Activated naive CD4-positive, alpha-beta T cell treated with anti-CD3 and anti-CD28 coated beads for 36 hours (primary cell): ENCODE measurements at regions of chr6 and their contacts with region 1.

Region 1: DNA sequence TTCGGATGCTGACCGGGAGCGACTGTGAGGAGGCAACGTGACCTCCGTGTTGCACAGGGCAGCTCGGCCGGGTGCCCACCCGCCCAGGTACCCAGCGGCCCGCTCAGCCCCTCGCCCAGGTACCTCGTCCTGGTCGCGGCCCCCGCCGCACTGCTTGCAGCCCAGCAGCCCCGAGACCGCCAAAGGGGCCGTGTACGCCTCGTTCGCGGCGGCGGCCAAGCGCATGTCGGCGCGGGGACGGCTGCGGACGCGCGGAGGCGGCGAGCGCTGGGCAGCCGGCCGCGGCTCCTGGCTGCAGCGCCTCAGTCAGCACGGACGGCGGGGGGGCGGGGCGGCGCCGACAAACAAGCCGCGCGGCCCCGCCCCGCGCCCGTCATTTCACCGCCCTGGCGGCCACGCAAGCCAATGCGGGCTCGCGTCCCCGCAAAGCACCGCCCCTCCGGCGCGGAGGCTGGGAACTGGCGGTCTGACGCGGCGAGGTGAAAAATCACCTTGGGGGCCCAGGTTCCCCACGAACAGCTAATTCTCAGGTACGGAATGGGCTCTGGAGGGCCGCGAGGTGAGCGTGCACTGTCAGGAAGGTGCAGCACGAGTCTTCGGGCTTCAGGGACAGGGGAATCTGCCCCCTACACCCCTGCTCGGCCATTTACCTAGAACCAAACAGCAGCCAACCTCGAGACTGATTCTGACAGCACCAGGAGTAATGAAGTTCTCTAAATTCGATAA is 85.2 kb downstream of the SESN1 start:
- DNase-seq: peak; percentile 92
- H3K4me3 Mint-ChIP-seq: peak overlapping the region; percentile 95
- H3K27ac Mint-ChIP-seq: peak overlapping the region; percentile 96
- H3K4me1 Mint-ChIP-seq: peaks cover 60% of the 10 kb centered on the region
- H3K27me3 Mint-ChIP-seq: no peaks in the 10 kb centered on the region

Region 2: GRCh38 chr6:107731422-107732319 is 1277.7 kb before region 1 on chr6:
- CTCF ChIA-PET with region 1: no interaction called
- intact Hi-C with region 1: loop called (anchors 10 kb)
- DNase-seq: peak; percentile 43
- H3K4me3 Mint-ChIP-seq: peak overlapping the region; percentile 80
- H3K27ac Mint-ChIP-seq: peak overlapping the region; percentile 86
- H3K4me1 Mint-ChIP-seq: peaks cover 74% of the 10 kb centered on the region
- H3K27me3 Mint-ChIP-seq: no peaks in the 10 kb centered on the region

Region 3: DNA sequence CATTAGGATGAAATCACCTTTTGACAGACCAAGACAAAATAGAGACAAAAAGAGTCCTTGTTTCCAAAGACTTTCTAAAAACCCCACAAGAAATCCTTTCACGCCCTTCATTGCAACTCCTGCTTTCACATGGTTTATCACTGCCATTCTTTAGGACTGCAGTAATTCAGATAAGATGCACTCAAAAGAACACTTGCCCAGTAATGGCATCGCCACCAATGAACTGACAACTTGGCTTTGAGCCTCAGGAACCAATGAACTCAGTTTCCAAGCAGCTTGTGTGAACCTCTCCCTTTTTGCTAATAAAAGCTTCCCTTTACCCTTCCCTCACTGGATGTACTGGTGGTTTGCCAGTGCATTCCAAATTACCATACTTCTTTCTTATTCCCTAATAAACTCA is 956.7 kb before region 1 on chr6:
- CTCF ChIA-PET with region 1: no interaction called
- intact Hi-C with region 1: no loop called
- DNase-seq: no peak
- H3K4me3 Mint-ChIP-seq: no peak overlapping the region
- H3K27ac Mint-ChIP-seq: no peak overlapping the region
- H3K4me1 Mint-ChIP-seq: no peaks in the 10 kb centered on the region
- H3K27me3 Mint-ChIP-seq: no peaks in the 10 kb centered on the region

Region 4: GRCh38 chr6:108074359-108075144 is 934.8 kb before region 1 on chr6 and contains the start of gene OSTM1:
- CTCF ChIA-PET with region 1: no interaction called
- intact Hi-C with region 1: loop called (anchors 10 kb)
- DNase-seq: peak; percentile 93
- H3K4me3 Mint-ChIP-seq: peak within 1 kb of the TSS; percentile 80
- H3K27ac Mint-ChIP-seq: peak within 1 kb of the TSS; percentile 78
- H3K4me1 Mint-ChIP-seq: peaks cover 30% of the 10 kb centered on the region
- H3K27me3 Mint-ChIP-seq: no peaks in the 10 kb centered on the region
- total RNA-seq, gene OSTM1: 7.1 to 7.5 TPM

Region 5: GRCh38 chr6:108558372-108559096 is 450.9 kb before region 1 on chr6:
- CTCF ChIA-PET with region 1: interaction called, 6 read pairs
- intact Hi-C with region 1: loop called (anchors 1 kb)
- DNase-seq: peak; percentile 97
- H3K4me3 Mint-ChIP-seq: peak overlapping the region; percentile 88
- H3K27ac Mint-ChIP-seq: peak overlapping the region; percentile 89
- H3K4me1 Mint-ChIP-seq: peaks cover 16% of the 10 kb centered on the region
- H3K27me3 Mint-ChIP-seq: peaks cover 10% of the 10 kb centered on the region

Region 6: DNA sequence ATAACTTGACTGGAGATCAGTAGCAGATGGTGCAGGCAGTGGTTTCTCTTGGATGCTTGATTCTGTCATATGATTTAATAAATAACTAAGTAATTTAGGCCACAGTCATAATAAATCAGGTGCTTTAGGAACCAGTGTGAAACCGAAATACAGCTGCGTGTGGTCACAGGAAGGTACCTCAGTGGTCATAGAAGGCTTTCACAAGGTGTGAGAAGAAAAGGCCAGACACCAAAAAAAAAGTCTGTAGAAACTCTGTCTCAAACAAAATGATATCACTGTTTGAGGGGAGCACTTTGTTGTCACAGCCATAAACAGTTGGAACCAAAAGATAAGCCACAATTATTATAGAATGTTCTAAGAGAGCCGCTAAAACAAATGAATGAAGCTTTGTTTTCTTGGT is 104.7 kb before region 1 on chr6:
- CTCF ChIA-PET with region 1: interaction called, 5 read pairs
- intact Hi-C with region 1: loop called (anchors 5 kb)
- DNase-seq: no peak
- H3K4me3 Mint-ChIP-seq: no peak overlapping the region
- H3K27ac Mint-ChIP-seq: no peak overlapping the region
- H3K4me1 Mint-ChIP-seq: peaks cover 14% of the 10 kb centered on the region
- H3K27me3 Mint-ChIP-seq: no peaks in the 10 kb centered on the region

Region 7: GRCh38 chr6:109059571-109060021 is 50.2 kb after region 1 on chr6:
- CTCF ChIA-PET with region 1: interaction called, 3 read pairs
- intact Hi-C with region 1: loop called (anchors 1 kb)
- DNase-seq: peak; percentile 19
- H3K4me3 Mint-ChIP-seq: peak overlapping the region; percentile 35
- H3K27ac Mint-ChIP-seq: peak overlapping the region; percentile 55
- H3K4me1 Mint-ChIP-seq: peaks cover 40% of the 10 kb centered on the region
- H3K27me3 Mint-ChIP-seq: no peaks in the 10 kb centered on the region

Region 8: DNA sequence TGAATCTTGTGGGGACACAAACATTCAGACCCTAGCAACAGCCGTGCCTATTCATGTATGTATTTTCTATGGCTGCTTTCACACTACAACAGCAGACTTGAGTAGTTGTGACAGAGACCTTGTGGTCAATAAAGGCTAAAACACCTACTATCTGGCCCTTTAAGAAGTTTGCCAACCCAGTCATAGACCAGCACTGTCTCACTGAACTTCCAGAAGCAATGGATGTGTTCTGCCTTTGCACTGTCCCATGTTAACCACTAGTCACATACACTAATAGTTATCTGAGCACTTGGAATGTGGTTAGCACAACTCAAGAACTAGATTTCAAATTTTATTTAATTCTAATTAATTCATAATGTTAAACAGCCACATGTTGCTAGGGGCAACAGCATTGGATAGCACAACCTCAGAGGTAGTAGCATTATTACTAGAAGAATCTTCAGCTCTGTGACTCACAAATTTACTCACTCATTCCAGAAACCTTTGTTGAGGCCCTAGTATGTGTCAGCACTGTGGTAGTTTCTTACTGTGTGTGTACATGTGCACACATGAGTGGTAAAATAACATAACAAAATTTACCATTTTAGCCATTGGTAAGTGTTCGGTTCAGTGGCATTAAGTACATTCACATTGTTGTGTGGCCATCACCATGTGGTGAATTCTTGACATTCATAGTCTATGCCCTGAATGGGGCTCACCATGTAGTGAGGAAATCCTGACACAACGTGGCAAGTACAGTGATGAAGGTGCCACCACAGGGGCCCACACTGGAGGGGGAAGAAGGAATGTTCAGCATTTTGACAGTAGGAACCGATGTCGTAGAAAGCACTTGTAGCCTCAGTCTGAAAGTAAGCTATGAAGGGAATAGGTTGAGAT is 193.2 kb after region 1 on chr6:
- CTCF ChIA-PET with region 1: no interaction called
- intact Hi-C with region 1: loop called (anchors 1 kb)
- DNase-seq: peak; percentile 62
- H3K4me3 Mint-ChIP-seq: no peak overlapping the region
- H3K27ac Mint-ChIP-seq: no peak overlapping the region
- H3K4me1 Mint-ChIP-seq: peaks cover 7% of the 10 kb centered on the region
- H3K27me3 Mint-ChIP-seq: no peaks in the 10 kb centered on the region